ENCODE measurements at regions of chr1 and their contacts with region 1.

Region 1: GRCh38 chr1:202750758-202751157 is 40.5 kb upstream of the SYT2 start:
- DNase-seq: no peak
- ATAC-seq: no peak
- H3K4me3 Mint-ChIP-seq: no peak overlapping the region
- H3K27ac Mint-ChIP-seq: no peak overlapping the region
- H3K4me1 Mint-ChIP-seq: no peaks in the 10 kb centered on the region
- H3K27me3 Mint-ChIP-seq: no peaks in the 10 kb centered on the region

Region 2: DNA sequence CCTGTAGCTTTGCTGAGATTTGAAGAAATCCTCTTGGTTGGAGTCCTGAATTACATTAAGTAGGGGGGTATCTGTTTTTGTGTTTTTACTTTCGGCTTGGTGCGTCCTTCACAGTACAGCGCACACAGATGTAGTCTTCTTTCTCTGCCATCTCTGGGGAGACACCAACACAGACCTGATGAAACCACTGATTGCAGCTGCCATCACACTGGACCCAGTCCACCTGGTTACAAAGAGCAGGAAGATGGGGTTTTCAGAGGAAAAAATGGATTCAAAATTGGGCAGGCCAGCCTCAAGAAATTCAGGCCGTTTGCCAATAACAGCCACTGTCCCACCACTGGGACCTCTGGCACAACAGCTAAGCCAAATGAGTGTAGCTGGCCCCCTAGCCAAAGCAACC is 21.8 kb before region 1 on chr1:
- CTCF ChIA-PET with region 1: no interaction called
- DNase-seq: no peak
- ATAC-seq: no peak
- H3K4me3 Mint-ChIP-seq: no peak overlapping the region
- H3K27ac Mint-ChIP-seq: no peak overlapping the region
- H3K4me1 Mint-ChIP-seq: no peaks in the 10 kb centered on the region
- H3K27me3 Mint-ChIP-seq: no peaks in the 10 kb centered on the region

Region 3: GRCh38 chr1:202852163-202852904 is 101.6 kb after region 1 on chr1:
- CTCF ChIA-PET with region 1: interaction called, 26 read pairs
- DNase-seq: peak; percentile 70
- ATAC-seq: peak; percentile 91
- H3K4me3 Mint-ChIP-seq: no peak overlapping the region
- H3K27ac Mint-ChIP-seq: no peak overlapping the region
- H3K4me1 Mint-ChIP-seq: peaks cover 12% of the 10 kb centered on the region
- H3K27me3 Mint-ChIP-seq: no peaks in the 10 kb centered on the region